Left cardiac atrium (tissue), 4 donors: ENCODE measurements at regions of chr10 and their contacts with region 1.

Region 1: DNA sequence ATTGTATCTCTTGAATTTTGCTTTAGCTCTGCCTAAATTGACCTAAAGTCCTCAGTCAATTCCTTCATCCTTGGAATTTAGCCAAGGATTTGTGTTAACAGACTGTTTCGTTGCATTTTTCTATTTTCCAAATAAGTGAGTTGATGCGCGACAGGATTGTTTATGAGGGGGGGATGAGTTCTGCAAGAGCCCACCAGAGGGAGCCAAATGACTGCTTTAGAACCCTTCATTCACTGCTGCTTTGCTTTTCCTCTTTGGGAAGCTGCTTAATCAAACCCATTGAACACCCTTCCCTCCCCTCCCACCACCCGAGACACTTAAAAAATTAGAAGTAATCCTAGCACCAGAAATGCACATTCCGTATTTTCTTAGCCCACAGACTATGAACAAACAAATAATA is 33.7 kb upstream of the PTF1A start:
- DNase-seq: no peak
- ATAC-seq: peak; percentile 65 to 81

Region 2: DNA sequence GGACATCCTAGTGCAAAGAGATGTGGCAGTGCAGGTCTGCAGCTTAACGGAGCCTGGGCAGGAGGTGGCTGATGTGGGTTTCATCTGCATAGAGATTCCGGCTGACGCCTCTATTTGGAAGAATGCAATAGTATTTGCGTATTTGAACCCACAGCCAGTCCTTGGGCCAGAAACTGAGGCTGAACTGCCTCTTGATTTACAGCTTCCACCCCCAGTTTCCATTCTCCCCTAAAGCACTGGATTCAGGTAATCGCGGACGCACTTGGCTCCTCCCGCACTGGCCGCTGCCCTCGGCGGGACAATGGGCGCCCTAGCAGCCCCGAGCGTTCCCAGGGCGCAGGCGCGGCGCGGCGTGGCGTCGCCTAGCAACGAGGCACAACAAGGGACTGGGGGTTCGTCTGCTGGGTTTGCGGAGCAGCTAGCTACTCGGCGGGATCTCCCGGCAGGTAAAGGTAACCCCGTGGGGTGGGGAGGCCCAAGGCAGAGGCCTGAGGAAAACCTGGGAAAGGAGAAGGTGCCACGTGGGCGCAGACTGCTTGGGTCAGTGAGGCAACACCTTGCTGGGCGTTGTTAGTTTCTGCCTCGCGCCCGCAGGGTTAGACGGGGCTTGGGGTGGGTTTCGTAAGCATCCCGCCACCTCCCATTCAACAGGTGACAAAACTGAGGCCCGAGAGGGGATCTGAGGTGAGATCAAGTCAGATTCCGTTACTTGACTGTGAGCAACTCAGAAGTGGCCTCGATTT is 230.5 kb before region 1 on chr10 and contains the start of gene ARMC3:
- intact Hi-C with region 1: no loop called
- DNase-seq: peak; percentile 76
- ATAC-seq: peak; percentile 90 to 98
- total RNA-seq, gene ARMC3: not detected

Region 3: DNA sequence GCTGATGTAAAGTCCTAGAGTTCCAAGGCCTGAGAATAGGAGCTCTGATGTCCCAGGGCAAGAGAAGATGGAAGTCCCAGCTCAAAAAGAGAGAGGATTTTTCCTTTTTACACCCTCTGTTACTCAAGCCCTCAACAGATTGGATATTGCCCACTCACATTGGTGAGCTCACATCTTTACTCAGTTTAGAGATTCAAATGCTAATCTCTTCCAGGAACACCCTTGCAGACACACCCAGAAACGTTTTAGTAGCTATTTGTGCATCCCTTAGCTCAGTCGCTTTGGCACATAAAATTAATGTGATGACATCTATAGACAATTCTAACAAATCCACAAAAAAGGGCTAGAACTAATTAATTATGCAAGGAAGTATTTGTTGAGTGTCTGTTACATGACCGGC is 203.4 kb before region 1 on chr10:
- intact Hi-C with region 1: no loop called
- DNase-seq: no peak
- ATAC-seq: no peak

Region 4: GRCh38 chr10:23293145-23293724 is 134.9 kb after region 1 on chr10:
- intact Hi-C with region 1: loop called in 1 of 2 experiments (anchors 2 kb)
- DNase-seq: no peak
- ATAC-seq: no peak

Region 5: DNA sequence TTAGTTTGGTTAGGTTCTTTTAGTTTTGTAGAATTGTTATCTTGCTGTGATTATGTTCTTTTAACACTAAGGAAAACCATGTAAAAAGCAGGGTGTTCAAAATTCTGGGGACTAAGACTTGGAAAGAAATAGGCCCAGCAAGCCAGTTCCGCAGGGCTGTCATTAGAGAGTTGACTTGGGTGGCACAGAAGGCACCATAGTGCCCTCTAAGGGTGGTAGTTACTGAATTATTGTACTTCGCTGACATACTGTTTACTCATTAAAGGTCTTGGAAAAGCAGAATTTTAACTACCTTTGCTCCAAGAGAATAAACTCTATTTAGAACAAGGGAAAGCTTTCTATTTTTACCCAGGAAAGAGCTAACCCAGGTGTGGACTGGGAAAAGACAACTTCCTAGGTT is 367.0 kb after region 1 on chr10:
- intact Hi-C with region 1: loop called in 1 of 2 experiments (anchors 5 kb)
- DNase-seq: no peak
- ATAC-seq: peak; percentile 73 to 77

Region 6: DNA sequence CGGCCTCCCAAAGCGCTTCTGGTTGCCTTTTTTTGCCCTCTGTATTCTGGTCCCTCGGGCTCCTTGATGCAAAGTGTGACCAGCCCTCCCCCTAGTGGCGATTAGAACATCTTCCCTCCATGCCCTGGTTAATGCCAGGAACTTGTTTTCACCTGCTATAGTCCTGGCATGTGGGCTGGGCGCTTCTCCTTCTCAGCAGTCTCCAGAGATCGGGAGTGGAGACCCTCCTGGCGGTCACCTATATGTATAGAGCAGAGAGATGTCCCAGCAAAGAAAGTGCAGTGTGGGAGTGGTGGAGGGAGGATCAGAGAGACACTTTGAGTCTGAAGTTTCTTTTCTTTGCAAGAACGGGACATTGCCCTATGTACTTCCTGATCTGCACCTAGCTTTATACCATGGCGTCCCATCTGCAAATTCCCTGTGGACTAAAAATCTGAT is 544.6 kb after region 1 on chr10:
- intact Hi-C with region 1: loop called in 1 of 2 experiments (anchors 2 kb)
- DNase-seq: peak; percentile 40
- ATAC-seq: peak; percentile 59 to 80

Region 7: DNA sequence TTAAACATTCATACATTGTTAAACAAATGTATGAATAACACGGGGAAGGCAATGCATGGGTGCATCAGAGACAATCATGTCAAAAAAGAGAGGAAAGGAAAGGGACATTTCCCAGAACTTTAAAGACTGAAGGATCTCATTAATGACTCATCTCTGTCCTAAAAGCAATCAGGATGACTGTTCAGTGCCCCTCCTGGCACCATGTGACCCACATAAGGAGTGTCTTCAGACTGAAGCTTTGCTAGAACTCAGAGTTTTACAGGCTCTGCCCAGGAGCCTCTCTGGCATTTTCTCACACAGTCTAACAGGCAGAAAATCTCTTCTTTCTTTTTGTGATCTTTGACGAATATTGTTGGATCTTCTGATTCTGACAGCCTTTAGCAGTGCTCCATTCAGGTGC is 595.8 kb after region 1 on chr10:
- intact Hi-C with region 1: no loop called
- DNase-seq: no peak
- ATAC-seq: no peak